ENCODE measurements at regions of chr1 and their contacts with region 1.

Region 1: GRCh38 chr1:24847995-24848881 is 81.8 kb downstream of the RUNX3 start:
- DNase-seq: peak; percentile 88 to 92
- H3K4me3 ChIP-seq: peak overlapping the region; percentile 70
- H3K4me3 Mint-ChIP-seq: peak overlapping the region; percentile 73
- H3K27ac Mint-ChIP-seq: peak overlapping the region; percentile 76
- H3K4me1 ChIP-seq: no peaks in the 10 kb centered on the region; the same call in 1 of the 2 replicates
- H3K4me1 Mint-ChIP-seq: no peaks in the 10 kb centered on the region
- H3K27me3 ChIP-seq: no peaks in the 10 kb centered on the region
- H3K27me3 Mint-ChIP-seq: no peaks in the 10 kb centered on the region
- CTCF ChIP-seq: peak; percentile 88

Region 2: DNA sequence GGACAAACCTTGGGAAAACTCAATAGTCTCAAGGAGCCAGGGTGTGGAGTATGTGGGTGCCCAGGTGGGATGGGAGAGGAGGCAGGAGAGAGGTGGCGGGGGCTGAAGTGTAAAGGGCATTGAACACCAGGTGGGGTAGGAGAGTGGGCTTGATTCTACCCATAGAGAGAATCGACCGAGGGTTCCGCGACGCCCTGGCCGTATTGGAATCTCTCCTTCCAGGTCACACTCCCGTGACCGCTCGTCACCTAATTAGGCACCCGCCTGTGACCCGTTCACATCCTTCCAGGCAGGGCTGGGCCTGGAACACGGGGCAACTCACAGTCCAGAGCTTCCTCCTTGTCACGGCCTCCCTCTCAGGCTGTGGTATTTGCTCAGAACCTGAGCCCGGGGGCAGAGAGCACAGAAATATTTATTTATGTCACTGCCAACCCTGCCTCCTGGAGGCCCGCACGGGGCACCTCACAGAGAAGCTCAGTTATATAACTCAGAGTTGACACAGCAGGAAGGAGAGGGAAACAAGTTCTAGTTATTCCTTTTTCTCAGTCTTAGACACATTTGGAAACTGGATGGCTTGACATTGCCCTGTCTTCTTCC is 280.3 kb before region 1 on chr1:
- CTCF ChIA-PET with region 1: no interaction called
- POLR2A ChIA-PET with region 1: interaction called, 10 read pairs
- intact Hi-C with region 1: no loop called
- DNase-seq: peak; percentile 57 to 68
- H3K4me3 ChIP-seq: no peak overlapping the region
- H3K4me3 Mint-ChIP-seq: no peak overlapping the region
- H3K27ac Mint-ChIP-seq: no peak overlapping the region
- H3K4me1 ChIP-seq: 0 out of 2 replicates have a peak, but pooled peaks cover 9% of the 10 kb centered on the region
- H3K4me1 Mint-ChIP-seq: no peaks in the 10 kb centered on the region
- H3K27me3 ChIP-seq: no peaks in the 10 kb centered on the region
- H3K27me3 Mint-ChIP-seq: no peaks in the 10 kb centered on the region
- CTCF ChIP-seq: peak in 1 of 2 experiments; percentile 8

Region 3: DNA sequence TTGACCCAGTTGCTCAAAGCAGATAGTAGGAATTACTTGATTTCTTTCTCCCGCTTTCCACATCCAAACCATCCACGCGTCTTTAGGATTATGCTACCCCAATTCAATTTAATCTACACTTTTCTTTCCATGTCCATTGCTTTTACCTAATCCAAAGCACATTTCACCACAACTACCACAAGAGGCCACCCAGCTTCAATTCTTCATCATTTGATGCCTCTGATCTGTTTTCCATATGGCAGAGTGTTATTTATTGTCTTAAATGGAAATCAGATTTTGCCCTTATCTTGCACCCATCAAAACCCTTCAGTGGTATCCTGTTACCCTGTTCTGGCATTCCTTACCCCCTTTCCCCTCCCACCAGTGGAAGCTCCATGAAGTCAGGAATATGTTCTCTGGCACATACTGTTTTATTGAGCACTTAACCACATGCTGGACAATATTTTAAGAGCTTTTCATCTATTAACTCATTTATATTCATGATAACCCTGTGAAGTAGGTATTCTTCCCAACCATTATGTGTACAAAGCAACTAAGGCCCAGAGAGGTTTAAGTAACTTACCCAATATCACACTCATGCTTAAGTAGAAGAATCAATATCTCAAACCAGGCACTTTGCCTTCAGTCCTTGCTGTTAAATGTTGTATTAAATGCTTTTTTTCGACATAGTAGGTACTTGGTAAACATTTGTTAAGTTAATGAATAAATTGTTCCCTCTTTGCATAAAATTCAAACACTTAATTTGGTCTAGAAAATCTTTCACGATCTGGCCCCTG is 68.4 kb before region 1 on chr1:
- CTCF ChIA-PET with region 1: no interaction called
- POLR2A ChIA-PET with region 1: no interaction called
- intact Hi-C with region 1: no loop called
- DNase-seq: no peak
- H3K4me3 ChIP-seq: no peak overlapping the region
- H3K4me3 Mint-ChIP-seq: no peak overlapping the region
- H3K27ac Mint-ChIP-seq: no peak overlapping the region
- H3K4me1 ChIP-seq: 0 out of 2 replicates have a peak, but pooled peaks cover 4% of the 10 kb centered on the region
- H3K4me1 Mint-ChIP-seq: peaks cover 7% of the 10 kb centered on the region
- H3K27me3 ChIP-seq: no peaks in the 10 kb centered on the region
- H3K27me3 Mint-ChIP-seq: no peaks in the 10 kb centered on the region
- CTCF ChIP-seq: no peak

Region 4: GRCh38 chr1:24897767-24898483 is 49.7 kb after region 1 on chr1:
- CTCF ChIA-PET with region 1: interaction called, 18 read pairs
- POLR2A ChIA-PET with region 1: no interaction called
- intact Hi-C with region 1: loop called (anchors 1 kb)
- DNase-seq: peak; percentile 53 to 71
- H3K4me3 ChIP-seq: no peak overlapping the region
- H3K4me3 Mint-ChIP-seq: no peak overlapping the region
- H3K27ac Mint-ChIP-seq: no peak overlapping the region
- H3K4me1 ChIP-seq: no peaks in the 10 kb centered on the region
- H3K4me1 Mint-ChIP-seq: no peaks in the 10 kb centered on the region
- H3K27me3 ChIP-seq: no peaks in the 10 kb centered on the region
- H3K27me3 Mint-ChIP-seq: no peaks in the 10 kb centered on the region
- CTCF ChIP-seq: peak; percentile 68 to 80

Region 5: DNA sequence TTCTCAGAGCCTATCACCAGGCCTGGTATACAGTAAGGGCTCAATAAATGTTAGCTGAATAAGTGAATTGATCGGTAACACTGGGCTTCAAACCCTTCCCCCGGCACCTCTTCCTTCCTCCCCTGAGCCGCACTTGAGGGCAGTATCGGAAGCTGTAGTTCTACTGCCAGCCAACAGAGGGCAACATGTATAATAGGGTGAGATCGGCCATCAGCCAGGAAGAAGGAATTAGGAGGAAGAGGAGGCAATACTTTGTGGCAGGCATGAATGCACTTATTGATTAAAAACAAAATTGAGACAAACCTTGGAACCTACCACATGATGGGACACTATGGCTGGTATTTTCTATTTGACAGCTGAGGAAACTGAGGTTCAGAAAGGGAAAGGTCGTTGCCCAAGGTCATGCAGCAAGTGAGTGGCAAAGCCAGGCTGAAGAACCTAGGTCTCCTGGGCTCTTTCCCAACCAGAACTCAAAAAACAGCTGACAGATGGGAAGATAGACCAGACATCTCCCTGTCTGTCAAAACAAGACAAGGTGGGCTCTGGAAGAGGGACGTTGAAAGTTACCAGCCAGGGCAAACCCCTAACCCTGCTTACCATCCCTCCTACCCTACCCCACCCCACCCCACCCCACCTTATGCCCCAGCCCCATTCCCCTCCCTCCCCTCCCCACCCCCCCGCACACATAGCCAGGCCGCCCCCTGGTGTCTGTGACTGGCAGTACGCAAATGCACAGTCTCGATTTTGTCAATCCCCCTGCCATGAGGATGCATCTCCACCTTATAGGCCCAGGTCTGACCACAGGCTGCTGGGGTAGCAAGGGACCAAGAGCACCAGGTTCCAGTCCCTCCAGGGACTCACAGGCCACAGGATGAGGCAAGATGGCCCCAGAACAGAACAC is 189.2 kb after region 1 on chr1:
- CTCF ChIA-PET with region 1: no interaction called
- POLR2A ChIA-PET with region 1: no interaction called
- intact Hi-C with region 1: loop called (anchors 2 kb)
- DNase-seq: peak in 1 of 2 experiments; percentile 40
- H3K4me3 ChIP-seq: no peak overlapping the region
- H3K4me3 Mint-ChIP-seq: no peak overlapping the region
- H3K27ac Mint-ChIP-seq: no peak overlapping the region
- H3K4me1 ChIP-seq: no peaks in the 10 kb centered on the region
- H3K4me1 Mint-ChIP-seq: no peaks in the 10 kb centered on the region
- H3K27me3 ChIP-seq: no peaks in the 10 kb centered on the region
- H3K27me3 Mint-ChIP-seq: no peaks in the 10 kb centered on the region
- CTCF ChIP-seq: peak in 1 of 2 experiments; percentile 36

Region 6: DNA sequence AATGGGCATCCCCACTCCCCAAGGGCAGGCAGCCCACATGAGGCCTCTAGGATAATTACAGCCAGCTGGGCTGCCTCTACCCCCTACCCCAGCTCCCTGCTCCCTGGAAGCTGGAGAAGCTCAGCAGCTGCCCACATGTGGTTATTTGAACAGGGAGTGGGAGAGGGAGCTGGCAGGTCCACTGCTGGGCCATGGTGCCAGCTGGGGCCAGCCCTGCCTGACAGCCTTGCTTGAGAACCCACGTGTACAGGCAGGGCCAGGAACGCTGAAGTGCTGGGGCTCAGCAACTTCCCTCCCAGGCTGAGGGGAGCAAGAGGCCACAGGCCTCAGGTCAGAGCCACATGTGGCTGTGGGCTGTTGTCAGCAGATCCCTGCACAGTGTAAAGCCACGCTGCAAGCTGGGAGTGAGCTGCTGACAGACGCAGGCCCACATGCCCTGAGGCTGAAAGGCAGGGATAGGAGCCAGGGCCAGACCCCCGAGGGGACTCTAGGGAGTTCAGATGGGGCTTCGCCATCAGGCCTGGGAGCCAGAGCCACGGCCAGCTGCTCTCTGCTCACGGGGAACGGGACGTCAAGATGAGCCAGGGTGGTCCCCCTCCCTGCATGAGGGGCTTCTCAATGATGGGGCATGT is 255.0 kb after region 1 on chr1:
- CTCF ChIA-PET with region 1: interaction called, 3 read pairs
- POLR2A ChIA-PET with region 1: no interaction called
- intact Hi-C with region 1: loop called (anchors 2 kb)
- DNase-seq: no peak
- H3K4me3 ChIP-seq: no peak overlapping the region
- H3K4me3 Mint-ChIP-seq: no peak overlapping the region
- H3K27ac Mint-ChIP-seq: no peak overlapping the region
- H3K4me1 ChIP-seq: no peaks in the 10 kb centered on the region
- H3K4me1 Mint-ChIP-seq: no peaks in the 10 kb centered on the region
- H3K27me3 ChIP-seq: no peaks in the 10 kb centered on the region
- H3K27me3 Mint-ChIP-seq: no peaks in the 10 kb centered on the region
- CTCF ChIP-seq: no peak

Region 7: DNA sequence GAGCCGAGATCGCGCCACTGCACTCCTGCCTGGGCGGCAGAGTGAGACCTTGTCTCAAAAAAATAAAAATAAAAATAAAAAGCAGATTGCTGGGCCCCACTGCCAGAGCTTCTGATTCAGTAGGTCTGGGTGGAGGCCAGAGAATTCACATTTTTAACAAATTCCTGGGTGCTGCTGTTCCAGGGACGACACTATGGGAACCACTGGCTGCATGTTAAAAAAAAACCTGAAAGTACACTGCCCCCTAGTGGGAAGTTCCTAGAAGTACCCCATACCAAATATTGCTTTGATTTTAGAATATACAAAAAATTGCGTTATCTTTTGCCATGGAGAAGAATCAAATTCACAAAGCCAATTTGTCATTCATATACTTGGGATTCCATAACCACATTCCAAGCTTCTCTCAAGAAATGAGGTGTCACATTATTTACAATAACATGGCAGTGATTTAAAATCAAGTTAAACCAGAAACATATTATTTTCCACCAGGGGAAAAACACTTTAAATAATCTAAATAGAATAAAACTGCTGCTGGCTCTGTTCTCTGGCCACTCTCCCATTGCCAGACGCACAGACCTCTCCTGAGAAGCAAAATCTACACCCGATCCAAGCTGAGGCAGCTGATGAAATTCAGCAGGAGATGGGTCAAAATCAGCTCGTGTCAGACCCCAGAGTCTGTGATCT is 356.7 kb after region 1 on chr1:
- CTCF ChIA-PET with region 1: no interaction called
- POLR2A ChIA-PET with region 1: no interaction called
- intact Hi-C with region 1: loop called (anchors 1 kb)
- DNase-seq: peak in 1 of 2 experiments; percentile 51
- H3K4me3 ChIP-seq: no peak overlapping the region
- H3K4me3 Mint-ChIP-seq: no peak overlapping the region
- H3K27ac Mint-ChIP-seq: no peak overlapping the region
- H3K4me1 ChIP-seq: no peaks in the 10 kb centered on the region
- H3K4me1 Mint-ChIP-seq: peaks cover 5% of the 10 kb centered on the region
- H3K27me3 ChIP-seq: no peaks in the 10 kb centered on the region
- H3K27me3 Mint-ChIP-seq: no peaks in the 10 kb centered on the region
- CTCF ChIP-seq: peak; percentile 34 to 47

Measured in Caco-2 (cell line).